Endothelial cell of umbilical vein (primary cell): ENCODE measurements at regions of chr3 and their contacts with region 1.

Region 1: GRCh38 chr3:99128725-99129505 is 227.4 kb upstream of the DCBLD2 start:
- DNase-seq: peak; percentile 91
- H3K4me3 ChIP-seq: no peak overlapping the region
- H3K27ac ChIP-seq: peak overlapping the region; percentile 76
- H3K4me1 ChIP-seq: peaks cover 23% of the 10 kb centered on the region
- H3K27me3 ChIP-seq: no peaks in the 10 kb centered on the region
- CTCF ChIP-seq: no peak
- POLR2A ChIP-seq: no peak

Region 2: GRCh38 chr3:99108508-99108907 is 20.4 kb before region 1 on chr3:
- CTCF ChIA-PET with region 1: interaction called, 3 read pairs
- POLR2A ChIA-PET with region 1: interaction called, 3 read pairs
- dilution Hi-C with region 1: no loop called
- intact Hi-C with region 1: loop called (anchors 1 kb)
- DNase-seq: peak; percentile 97
- H3K4me3 ChIP-seq: no peak overlapping the region
- H3K27ac ChIP-seq: peak overlapping the region; percentile 79
- H3K4me1 ChIP-seq: peaks cover 17% of the 10 kb centered on the region
- H3K27me3 ChIP-seq: no peaks in the 10 kb centered on the region
- CTCF ChIP-seq: no peak
- POLR2A ChIP-seq: no peak

Region 3: GRCh38 chr3:99319961-99320360 is 191.0 kb after region 1 on chr3:
- CTCF ChIA-PET with region 1: no interaction called
- POLR2A ChIA-PET with region 1: no interaction called
- dilution Hi-C with region 1: no loop called
- intact Hi-C with region 1: loop called (anchors 5 kb)
- DNase-seq: peak; percentile 87
- H3K4me3 ChIP-seq: no peak overlapping the region
- H3K27ac ChIP-seq: peak overlapping the region; percentile 91
- H3K4me1 ChIP-seq: peaks cover 30% of the 10 kb centered on the region
- H3K27me3 ChIP-seq: no peaks in the 10 kb centered on the region
- CTCF ChIP-seq: no peak
- POLR2A ChIP-seq: no peak